GM10248 (cell line): ENCODE measurements at regions of chr15 and their contacts with region 1.

Region 1: GRCh38 chr15:73991726-73992593 is at the start of gene STOML1:
- DNase-seq: peak; percentile 95
- CTCF ChIP-seq: peak; percentile 91

Region 2: GRCh38 chr15:73964736-73965093 is 27.2 kb before region 1 on chr15:
- CTCF ChIA-PET with region 1: interaction called, 162 read pairs
- POLR2A ChIA-PET with region 1: no interaction called
- DNase-seq: peak; percentile 86
- CTCF ChIP-seq: peak; percentile 95

Region 3: GRCh38 chr15:74011610-74012009 is 19.6 kb after region 1 on chr15:
- CTCF ChIA-PET with region 1: interaction called, 23 read pairs
- POLR2A ChIA-PET with region 1: interaction called, 4 read pairs
- DNase-seq: no peak
- CTCF ChIP-seq: no peak